Panc1 (cell line): ENCODE measurements at regions of chr2 and their contacts with region 1.

Region 1: GRCh38 chr2:102240640-102241370 is 54.0 kb downstream of the IL1RL2 start:
- DNase-seq: peak; percentile 77
- ATAC-seq: peak; percentile 98
- H3K4me3 ChIP-seq: no peak overlapping the region
- H3K27ac ChIP-seq: no peak overlapping the region
- H3K4me1 ChIP-seq: no peaks in the 10 kb centered on the region
- H3K27me3 ChIP-seq: peaks cover 5% of the 10 kb centered on the region
- CTCF ChIP-seq: peak; percentile 98

Region 2: DNA sequence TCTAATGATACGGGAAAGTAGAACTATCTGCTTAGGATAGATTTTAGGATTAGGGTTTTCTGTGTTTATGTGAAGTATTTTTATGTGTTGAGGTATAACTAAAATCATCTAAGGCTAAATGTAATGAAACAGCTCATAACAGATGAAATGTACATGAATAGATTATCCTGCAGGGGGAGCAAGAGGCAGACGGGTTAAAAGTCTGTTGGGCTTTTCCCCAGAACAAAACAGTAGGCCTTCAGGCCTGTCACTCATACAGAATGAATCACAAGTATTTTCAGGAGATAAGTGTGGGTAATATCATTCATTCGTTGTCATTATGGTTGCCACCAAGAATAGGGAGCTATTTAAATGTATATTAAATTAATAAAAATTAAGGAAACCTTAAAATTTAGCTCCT is 356.9 kb before region 1 on chr2:
- CTCF ChIA-PET with region 1: no interaction called
- POLR2A ChIA-PET with region 1: no interaction called
- in situ Hi-C with region 1: no loop called
- intact Hi-C with region 1: loop called (anchors 5 kb)
- DNase-seq: no peak
- ATAC-seq: 0 out of 2 replicates have a peak, but pooled peaks have one; percentile 68
- H3K4me3 ChIP-seq: no peak overlapping the region
- H3K27ac ChIP-seq: no peak overlapping the region
- H3K4me1 ChIP-seq: no peaks in the 10 kb centered on the region
- H3K27me3 ChIP-seq: no peaks in the 10 kb centered on the region
- CTCF ChIP-seq: peak; percentile 65

Region 3: GRCh38 chr2:101995804-101996203 is 245.0 kb before region 1 on chr2:
- CTCF ChIA-PET with region 1: interaction called, 3 read pairs
- POLR2A ChIA-PET with region 1: interaction called, 20 read pairs
- in situ Hi-C with region 1: no loop called
- intact Hi-C with region 1: no loop called
- DNase-seq: no peak
- ATAC-seq: no peak
- H3K4me3 ChIP-seq: no peak overlapping the region
- H3K27ac ChIP-seq: no peak overlapping the region
- H3K4me1 ChIP-seq: no peaks in the 10 kb centered on the region
- H3K27me3 ChIP-seq: peaks cover 8% of the 10 kb centered on the region
- CTCF ChIP-seq: no peak

Region 4: GRCh38 chr2:102005989-102006885 is 234.6 kb before region 1 on chr2:
- CTCF ChIA-PET with region 1: interaction called, 13 read pairs
- POLR2A ChIA-PET with region 1: no interaction called
- in situ Hi-C with region 1: no loop called
- intact Hi-C with region 1: no loop called
- DNase-seq: no peak
- ATAC-seq: 0 out of 2 replicates have a peak, but pooled peaks have one; percentile 75
- H3K4me3 ChIP-seq: no peak overlapping the region
- H3K27ac ChIP-seq: no peak overlapping the region
- H3K4me1 ChIP-seq: no peaks in the 10 kb centered on the region
- H3K27me3 ChIP-seq: no peaks in the 10 kb centered on the region
- CTCF ChIP-seq: peak; percentile 81

Region 5: GRCh38 chr2:102020596-102021181 is 220.1 kb before region 1 on chr2:
- CTCF ChIA-PET with region 1: interaction called, 20 read pairs
- POLR2A ChIA-PET with region 1: no interaction called
- in situ Hi-C with region 1: no loop called
- intact Hi-C with region 1: loop called (anchors 2 kb)
- DNase-seq: peak; percentile 64
- ATAC-seq: peak; percentile 98
- H3K4me3 ChIP-seq: no peak overlapping the region
- H3K27ac ChIP-seq: no peak overlapping the region
- H3K4me1 ChIP-seq: no peaks in the 10 kb centered on the region
- H3K27me3 ChIP-seq: peaks cover 2% of the 10 kb centered on the region; the same call in 1 of the 2 replicates
- CTCF ChIP-seq: peak; percentile 98